CD4-positive, alpha-beta memory T cell (primary cell): ENCODE measurements at regions of chr6 and their contacts with region 1.

Region 1: DNA sequence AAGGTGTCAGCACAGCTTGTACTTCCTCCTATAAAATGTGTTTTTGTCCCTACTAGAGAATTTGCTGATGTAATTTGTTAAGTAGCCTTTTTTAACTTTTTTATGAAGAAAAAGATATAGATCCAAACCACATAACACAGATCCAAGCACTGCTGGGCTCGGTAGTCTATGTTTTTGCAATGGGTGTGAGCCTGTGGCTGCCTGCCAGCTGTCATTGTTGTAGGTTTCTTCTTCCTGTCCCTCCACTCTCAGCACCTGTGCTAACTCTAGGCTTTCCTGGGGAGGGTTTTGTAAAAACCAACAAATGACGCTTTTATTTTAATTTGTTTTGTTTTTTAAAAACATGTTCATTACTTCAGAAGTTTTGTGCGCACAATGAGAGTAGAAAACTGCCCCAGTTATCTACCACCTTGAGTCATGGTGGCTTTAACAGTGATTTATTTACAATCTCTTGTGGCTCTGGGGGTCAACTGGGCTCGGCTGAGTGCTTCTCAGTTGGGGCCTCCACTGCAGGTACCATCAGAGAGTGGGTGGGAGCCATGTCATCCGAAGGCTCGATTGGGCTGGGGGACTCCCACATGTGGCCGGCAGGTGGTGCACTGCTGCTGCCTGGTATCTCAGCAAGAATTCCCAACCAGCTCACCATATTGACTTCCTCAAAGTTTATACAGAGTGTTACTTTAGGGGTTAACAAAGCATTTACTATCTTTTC is 3.1 kb upstream of the CCR6 start:
- DNase-seq: peak; percentile 85 to 91 (median 87)
- H3K4me3 ChIP-seq: peak overlapping the region in 1 of 2 donors; percentile 40
- H3K4me3 Mint-ChIP-seq: peak overlapping the region; percentile 65 to 85 (median 73)
- H3K27ac ChIP-seq: peak overlapping the region; percentile 63
- H3K27ac Mint-ChIP-seq: peak overlapping the region; percentile 94 to 98 (median 95)
- H3K4me1 ChIP-seq: peaks cover 85% of the 10 kb centered on the region
- H3K4me1 Mint-ChIP-seq: peaks cover 68 to 95% (median 79%) of the 10 kb centered on the region in 4 donors
- H3K27me3 ChIP-seq: no peaks in the 10 kb centered on the region
- H3K27me3 Mint-ChIP-seq: peaks cover 0 to 1% of the 10 kb centered on the region in 2 donors

Region 2: DNA sequence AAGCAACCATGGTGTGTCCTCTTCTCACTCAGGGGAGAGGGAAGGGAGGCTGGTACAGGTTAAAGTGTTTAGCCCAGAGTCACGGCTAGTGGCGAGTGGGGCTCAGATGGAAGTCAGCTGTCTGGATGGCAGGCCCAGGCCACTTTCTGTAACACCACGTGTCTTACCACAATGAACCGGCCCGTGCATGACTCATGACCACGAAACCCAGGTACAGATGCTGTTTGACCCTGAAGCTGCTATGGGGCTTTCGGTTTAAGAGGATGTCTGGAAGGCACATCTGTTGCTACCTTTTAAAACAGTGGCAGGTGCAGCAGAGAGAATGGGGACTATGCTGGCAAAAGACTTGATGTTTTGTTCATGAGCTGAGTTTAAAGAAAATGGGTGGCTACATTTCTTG is 700.5 kb before region 1 on chr6:
- CTCF ChIA-PET with region 1: no interaction called
- POLR2A ChIA-PET with region 1: no interaction called
- intact Hi-C with region 1: loop called (anchors 10 kb)
- DNase-seq: peak; percentile 45 to 82 (median 53)
- H3K4me3 ChIP-seq: no peak overlapping the region
- H3K4me3 Mint-ChIP-seq: peak overlapping the region in 7 of 8 donors; percentile 55 to 79 (median 70)
- H3K27ac ChIP-seq: peak overlapping the region; percentile 42
- H3K27ac Mint-ChIP-seq: peak overlapping the region; percentile 96 to 99 (median 98)
- H3K4me1 ChIP-seq: peaks cover 74% of the 10 kb centered on the region
- H3K4me1 Mint-ChIP-seq: peaks cover 55 to 74% (median 68%) of the 10 kb centered on the region in 4 donors
- H3K27me3 ChIP-seq: no peaks in the 10 kb centered on the region
- H3K27me3 Mint-ChIP-seq: peaks cover 0 to 4% of the 10 kb centered on the region in 2 donors

Region 3: GRCh38 chr6:166999145-166999883 is 120.5 kb before region 1 on chr6 and contains the start of gene CEP43:
- CTCF ChIA-PET with region 1: interaction called, 14 read pairs
- POLR2A ChIA-PET with region 1: interaction called, 26 read pairs
- intact Hi-C with region 1: loop called (anchors 2 kb)
- DNase-seq: peak; percentile 81 to 89 (median 87)
- H3K4me3 ChIP-seq: peak within 1 kb of the TSS; percentile 85 to 95
- H3K4me3 Mint-ChIP-seq: peak within 1 kb of the TSS; percentile 90 to 95 (median 94)
- H3K27ac ChIP-seq: peak within 1 kb of the TSS; percentile 81
- H3K27ac Mint-ChIP-seq: peak within 1 kb of the TSS; percentile 65 to 93 (median 91)
- H3K4me1 ChIP-seq: peaks cover 38% of the 10 kb centered on the region
- H3K4me1 Mint-ChIP-seq: peaks cover 21 to 35% (median 30%) of the 10 kb centered on the region in 4 donors
- H3K27me3 ChIP-seq: no peaks in the 10 kb centered on the region
- H3K27me3 Mint-ChIP-seq: no peaks in the 10 kb centered on the region
- total RNA-seq, gene CEP43: 19.5 to 24.9 TPM

Region 4: DNA sequence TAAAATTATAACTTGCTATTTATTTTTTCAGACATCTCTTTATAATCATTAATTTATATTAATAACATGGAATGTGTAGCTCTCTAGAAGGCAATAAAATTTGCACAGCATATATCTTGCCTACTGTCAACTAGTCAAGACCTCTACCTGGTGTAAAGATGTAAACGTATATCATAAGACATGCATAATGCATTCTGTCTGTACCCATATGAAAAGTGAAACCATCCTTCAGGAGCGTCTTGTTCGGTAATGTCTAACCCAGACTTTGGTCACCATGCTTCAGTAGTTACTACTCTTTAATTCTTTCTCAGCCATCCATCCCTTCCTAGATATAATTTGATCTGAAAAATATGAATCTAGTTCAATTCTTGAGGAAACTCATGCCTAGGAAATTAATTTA is 99.6 kb before region 1 on chr6:
- CTCF ChIA-PET with region 1: no interaction called
- POLR2A ChIA-PET with region 1: no interaction called
- intact Hi-C with region 1: no loop called
- DNase-seq: peak in 1 of 5 donors; percentile 21
- H3K4me3 ChIP-seq: no peak overlapping the region
- H3K4me3 Mint-ChIP-seq: peak overlapping the region in 5 of 8 donors; percentile 32 to 81 (median 68)
- H3K27ac ChIP-seq: no peak overlapping the region
- H3K27ac Mint-ChIP-seq: peak overlapping the region in 3 of 7 donors; percentile 57 to 81 (median 67)
- H3K4me1 ChIP-seq: no peaks in the 10 kb centered on the region
- H3K4me1 Mint-ChIP-seq: peaks cover 0 to 10% (median 0%) of the 10 kb centered on the region in 4 donors
- H3K27me3 ChIP-seq: no peaks in the 10 kb centered on the region
- H3K27me3 Mint-ChIP-seq: no peaks in the 10 kb centered on the region

Region 5: DNA sequence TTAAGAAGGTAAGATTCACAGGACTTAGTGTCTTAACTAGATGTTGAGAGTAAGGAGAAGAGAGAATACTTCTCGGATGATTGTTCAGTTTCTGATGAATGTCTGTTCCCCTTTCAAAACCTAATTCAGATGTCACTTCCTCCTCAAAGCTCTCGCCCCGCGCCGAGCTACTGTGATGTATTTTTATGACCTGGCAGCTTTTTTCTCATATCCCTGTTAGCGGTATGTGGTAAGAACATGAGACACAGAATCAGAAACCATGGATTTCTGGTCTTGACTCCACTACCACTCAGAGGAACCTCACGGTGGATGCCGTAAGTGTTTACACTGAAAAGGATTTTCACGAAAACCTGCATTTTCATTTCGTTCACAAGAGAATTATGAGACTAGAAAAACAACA is 72.3 kb before region 1 on chr6:
- CTCF ChIA-PET with region 1: interaction called, 7 read pairs
- POLR2A ChIA-PET with region 1: interaction called, 34 read pairs
- intact Hi-C with region 1: no loop called
- DNase-seq: peak; percentile 49 to 67 (median 64)
- H3K4me3 ChIP-seq: peak overlapping the region in 1 of 2 donors; percentile 28
- H3K4me3 Mint-ChIP-seq: peak overlapping the region; percentile 56 to 82 (median 71)
- H3K27ac ChIP-seq: peak overlapping the region; percentile 30
- H3K27ac Mint-ChIP-seq: peak overlapping the region; percentile 64 to 97 (median 85)
- H3K4me1 ChIP-seq: peaks cover 49% of the 10 kb centered on the region
- H3K4me1 Mint-ChIP-seq: peaks cover 26 to 57% (median 39%) of the 10 kb centered on the region in 4 donors
- H3K27me3 ChIP-seq: no peaks in the 10 kb centered on the region
- H3K27me3 Mint-ChIP-seq: no peaks in the 10 kb centered on the region

Region 6: GRCh38 chr6:167056370-167056769 is 63.5 kb before region 1 on chr6:
- CTCF ChIA-PET with region 1: interaction called, 3 read pairs
- POLR2A ChIA-PET with region 1: interaction called, 9 read pairs
- intact Hi-C with region 1: loop called (anchors 2 kb)
- DNase-seq: peak; percentile 64 to 84 (median 75)
- H3K4me3 ChIP-seq: no peak overlapping the region
- H3K4me3 Mint-ChIP-seq: peak overlapping the region; percentile 12 to 76 (median 67)
- H3K27ac ChIP-seq: no peak overlapping the region
- H3K27ac Mint-ChIP-seq: peak overlapping the region; percentile 6 to 87 (median 76)
- H3K4me1 ChIP-seq: peaks cover 56% of the 10 kb centered on the region
- H3K4me1 Mint-ChIP-seq: peaks cover 37 to 57% (median 42%) of the 10 kb centered on the region in 4 donors
- H3K27me3 ChIP-seq: no peaks in the 10 kb centered on the region
- H3K27me3 Mint-ChIP-seq: no peaks in the 10 kb centered on the region

Region 7: GRCh38 chr6:167130008-167130677 is 10.3 kb after region 1 on chr6:
- CTCF ChIA-PET with region 1: interaction called, 5 read pairs
- POLR2A ChIA-PET with region 1: interaction called, 20 read pairs
- intact Hi-C with region 1: no loop called
- DNase-seq: peak in 1 of 5 donors; percentile 34
- H3K4me3 ChIP-seq: no peak overlapping the region
- H3K4me3 Mint-ChIP-seq: peak overlapping the region in 4 of 8 donors; percentile 17 to 48 (median 25)
- H3K27ac ChIP-seq: peak overlapping the region; percentile 12
- H3K27ac Mint-ChIP-seq: peak overlapping the region; percentile 20 to 91 (median 85)
- H3K4me1 ChIP-seq: peaks cover 68% of the 10 kb centered on the region
- H3K4me1 Mint-ChIP-seq: peaks cover 40 to 78% (median 55%) of the 10 kb centered on the region in 4 donors
- H3K27me3 ChIP-seq: no peaks in the 10 kb centered on the region
- H3K27me3 Mint-ChIP-seq: no peaks in the 10 kb centered on the region

Region 8: GRCh38 chr6:167212713-167213005 is 92.8 kb after region 1 on chr6:
- CTCF ChIA-PET with region 1: no interaction called
- POLR2A ChIA-PET with region 1: no interaction called
- intact Hi-C with region 1: no loop called
- DNase-seq: no peak
- H3K4me3 ChIP-seq: no peak overlapping the region
- H3K4me3 Mint-ChIP-seq: no peak overlapping the region
- H3K27ac ChIP-seq: no peak overlapping the region
- H3K27ac Mint-ChIP-seq: no peak overlapping the region
- H3K4me1 ChIP-seq: no peaks in the 10 kb centered on the region
- H3K4me1 Mint-ChIP-seq: no peaks in the 10 kb centered on the region
- H3K27me3 ChIP-seq: no peaks in the 10 kb centered on the region
- H3K27me3 Mint-ChIP-seq: peaks cover 0 to 4% of the 10 kb centered on the region in 2 donors